Activated CD8-positive, alpha-beta memory T cell treated with anti-CD3 and anti-CD28 coated beads, Interleukin-2, amount 10 ng/mL, durations not matched to agents 7 days and 5 days (primary cell): ENCODE measurements at regions of chr6 and their contacts with region 1.

Region 1: DNA sequence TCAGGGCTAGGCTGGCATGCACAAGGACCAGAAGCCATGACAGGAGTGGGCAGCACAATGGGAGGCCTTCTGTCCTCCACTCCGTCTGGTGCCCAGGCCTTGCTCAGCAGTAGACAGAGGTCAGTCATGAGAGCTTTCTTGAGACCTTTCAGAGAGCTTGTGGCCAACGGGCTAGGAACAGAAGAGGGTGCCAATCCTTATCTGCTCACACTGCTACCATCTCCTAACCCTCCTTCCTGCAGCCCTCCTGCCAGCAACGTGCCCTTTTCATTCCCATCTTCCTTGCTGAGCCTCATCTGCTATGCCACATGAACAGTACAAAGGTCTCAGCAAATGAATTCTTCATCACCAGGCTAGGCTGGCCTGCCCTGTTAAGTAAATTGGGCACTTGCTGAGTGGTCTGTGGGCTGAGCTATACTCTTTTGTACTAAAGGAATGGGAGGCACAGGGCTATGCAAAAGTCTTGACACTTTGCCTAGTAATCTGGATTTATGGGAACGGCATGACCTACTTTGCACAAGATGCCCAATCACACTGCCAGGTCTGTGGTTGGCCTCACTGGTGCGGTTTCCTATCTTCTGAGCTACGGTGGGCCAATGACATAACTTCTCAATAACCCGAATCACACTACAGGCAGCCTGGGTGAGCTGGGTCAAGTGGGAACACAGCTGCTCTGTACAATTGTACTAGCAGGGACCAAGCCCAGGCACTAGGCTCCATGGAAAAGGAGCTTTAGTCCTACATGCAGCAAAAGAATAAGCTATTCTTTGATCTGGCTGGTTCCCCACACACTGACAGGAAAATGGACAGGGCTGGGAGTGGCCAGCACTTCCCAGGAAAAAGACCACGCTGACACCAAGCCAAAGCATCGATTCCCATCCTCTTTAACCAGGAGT is 47.8 kb downstream of the ELOVL5 start:
- DNase-seq: peak; percentile 50
- ATAC-seq: peak; percentile 45
- H3K4me3 Mint-ChIP-seq: no peak overlapping the region
- H3K27ac Mint-ChIP-seq: no peak overlapping the region
- H3K4me1 Mint-ChIP-seq: peaks cover 63% of the 10 kb centered on the region
- H3K27me3 Mint-ChIP-seq: no peaks in the 10 kb centered on the region

Region 2: DNA sequence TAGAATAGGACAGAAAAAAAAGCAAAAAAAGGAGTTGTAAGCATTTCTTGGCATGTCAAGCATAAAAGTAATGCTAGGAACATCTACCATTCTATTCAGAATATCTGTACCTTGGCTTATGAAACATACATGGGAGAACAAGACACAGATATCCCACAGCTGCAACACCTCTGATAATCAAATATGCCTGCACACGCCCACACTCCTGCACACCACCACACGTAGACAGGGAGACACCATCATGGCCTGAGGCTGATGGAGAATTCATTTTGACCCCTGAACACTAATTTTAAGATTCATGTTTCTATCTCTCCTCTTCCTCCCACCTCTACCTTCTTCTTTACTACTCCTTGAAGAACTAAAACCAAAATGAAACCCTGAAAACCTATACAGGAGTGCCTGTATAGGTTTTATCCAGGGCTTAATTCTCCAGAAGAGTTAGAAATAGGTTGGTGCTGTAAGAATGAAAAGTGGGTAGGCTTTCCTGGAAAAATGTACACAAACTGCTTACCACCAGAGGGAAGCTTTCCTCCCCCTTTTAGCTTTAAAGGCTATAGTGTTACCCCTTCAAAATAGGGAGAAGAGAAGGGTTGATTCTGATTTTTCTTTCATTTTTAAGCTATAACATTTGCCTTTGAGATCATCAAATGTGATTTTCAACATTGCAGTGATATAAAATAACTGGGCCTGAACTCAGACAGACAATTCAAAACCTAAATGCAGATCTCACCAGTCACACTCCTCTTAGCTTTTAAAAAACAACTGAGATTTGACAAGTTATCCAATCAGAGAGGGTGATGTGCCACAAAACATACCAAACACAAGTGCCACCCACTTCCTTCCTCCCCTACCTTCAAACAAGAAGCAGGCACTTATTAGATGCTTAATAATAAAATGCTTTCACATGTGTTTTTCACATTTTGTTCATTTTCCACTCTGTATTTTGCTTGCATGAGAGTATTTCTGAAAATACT is 10.1 kb before region 1 on chr6:
- CTCF ChIA-PET with region 1: interaction called, 20 read pairs
- DNase-seq: no peak
- ATAC-seq: peak; percentile 63
- H3K4me3 Mint-ChIP-seq: no peak overlapping the region
- H3K27ac Mint-ChIP-seq: peak overlapping the region; percentile 55
- H3K4me1 Mint-ChIP-seq: peaks cover 37% of the 10 kb centered on the region
- H3K27me3 Mint-ChIP-seq: no peaks in the 10 kb centered on the region